Esophagus muscularis mucosa (tissue), 4 donors: ENCODE measurements at regions of chr7 and their contacts with region 1.

Region 1: DNA sequence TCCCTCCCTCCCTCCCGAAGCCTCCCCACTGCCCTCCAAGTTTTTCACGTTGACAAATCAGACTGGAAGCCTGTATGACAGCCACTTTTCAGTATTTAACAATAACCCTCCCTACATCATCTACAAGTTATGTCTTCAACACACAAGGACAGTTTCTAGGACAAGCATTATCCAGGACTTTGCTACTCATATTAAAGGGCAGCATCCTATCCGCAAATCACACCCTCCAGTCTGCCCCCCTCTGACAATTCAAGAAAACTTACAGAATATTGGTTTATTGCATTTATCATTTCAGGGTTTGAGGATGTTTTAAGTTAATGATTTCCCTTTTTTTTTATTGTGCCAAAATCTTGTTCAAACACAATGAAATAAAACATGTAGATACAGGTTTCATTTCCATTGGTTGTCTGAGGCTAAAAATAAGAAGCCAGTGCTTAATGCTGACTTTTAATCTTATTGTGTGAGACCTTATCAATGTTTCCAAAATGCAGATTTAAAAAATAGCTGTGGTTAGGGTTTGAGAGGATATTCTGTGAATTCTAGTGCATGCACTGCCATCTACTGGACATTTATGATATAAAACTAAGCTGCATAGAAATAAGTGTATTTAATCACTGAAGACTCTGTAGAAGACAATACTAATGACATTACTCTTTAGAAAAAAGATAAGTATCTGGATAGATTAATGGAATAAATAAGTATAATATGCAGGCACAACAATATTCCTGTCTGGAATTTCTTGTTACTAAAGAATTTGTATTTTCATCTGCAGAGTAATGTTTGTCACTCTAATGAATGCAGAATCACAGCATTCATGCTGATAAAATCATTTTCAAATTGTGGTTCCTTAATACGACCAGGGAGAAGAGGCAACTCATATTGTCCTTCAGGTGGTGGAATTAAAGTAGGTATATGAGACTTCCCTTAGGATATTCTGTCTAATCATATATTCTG is 64.1 kb downstream of the CAV1 start:
- DNase-seq: no peak
- H3K4me3 ChIP-seq: no peak overlapping the region
- H3K27ac ChIP-seq: peak overlapping the region in 3 of 4 donors; percentile 2 to 38 (median 18)
- H3K4me1 ChIP-seq: peaks cover 12 to 29% (median 25%) of the 10 kb centered on the region in 4 donors
- H3K27me3 ChIP-seq: no peaks in the 10 kb centered on the region
- CTCF ChIP-seq: peak; percentile 67 to 78 (median 68)
- EP300 ChIP-seq: no peak
- POLR2A ChIP-seq: no peak

Region 2: DNA sequence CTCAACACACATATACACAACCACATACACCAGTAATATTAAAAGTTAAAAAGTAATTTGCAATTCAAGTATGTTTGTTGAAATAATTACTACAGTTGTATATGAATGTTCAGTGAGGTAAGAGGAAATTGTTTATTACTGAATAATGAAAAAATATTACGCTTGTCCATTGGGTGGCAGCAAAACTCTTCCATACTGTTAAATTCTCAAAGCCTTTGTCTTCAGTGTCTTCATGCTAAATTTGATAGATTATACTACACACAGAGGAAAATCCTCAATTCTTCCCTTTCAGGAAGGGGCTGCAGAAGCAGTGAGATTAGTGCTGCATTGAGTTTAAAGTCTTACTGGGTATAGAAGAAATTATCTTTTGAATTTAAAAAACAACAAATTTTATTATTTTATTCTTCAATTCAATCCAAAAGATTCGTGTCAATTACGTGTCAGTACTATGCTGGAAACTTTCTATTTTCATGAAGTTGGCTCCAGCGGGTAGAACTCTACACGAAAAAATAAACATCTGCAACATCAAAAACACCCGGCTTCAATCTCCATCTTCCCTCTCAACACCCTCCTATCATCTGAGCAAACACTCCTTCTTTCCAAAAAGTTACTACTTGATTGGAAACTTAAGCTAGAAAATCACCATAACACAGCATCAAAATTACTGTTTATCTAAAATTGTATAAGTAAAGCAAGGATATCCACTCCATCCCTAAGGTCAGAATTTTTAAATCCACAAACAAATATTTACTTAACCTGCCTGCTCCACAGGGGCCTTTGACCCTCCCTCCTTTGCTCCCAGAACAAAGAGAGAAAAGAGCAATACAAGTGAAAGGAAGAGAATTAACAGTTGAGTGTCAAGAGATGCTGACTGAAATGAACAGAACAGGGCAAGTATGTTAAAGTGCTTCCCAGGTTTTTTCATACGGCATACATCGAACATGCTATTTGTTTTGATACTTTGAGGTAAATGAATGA is 415.6 kb before region 1 on chr7:
- intact Hi-C with region 1: loop called (anchors 5 kb)
- DNase-seq: no peak
- H3K4me3 ChIP-seq: no peak overlapping the region
- H3K27ac ChIP-seq: no peak overlapping the region
- H3K4me1 ChIP-seq: no peaks in the 10 kb centered on the region
- H3K27me3 ChIP-seq: no peaks in the 10 kb centered on the region
- CTCF ChIP-seq: peak; percentile 53 to 66 (median 54)
- EP300 ChIP-seq: no peak
- POLR2A ChIP-seq: no peak

Region 3: GRCh38 chr7:116258734-116259133 is 330.2 kb before region 1 on chr7:
- intact Hi-C with region 1: loop called (anchors 2 kb)
- DNase-seq: no peak
- H3K4me3 ChIP-seq: no peak overlapping the region
- H3K27ac ChIP-seq: peak overlapping the region; percentile 25 to 56 (median 46)
- H3K4me1 ChIP-seq: peaks cover 5 to 15% (median 10%) of the 10 kb centered on the region in 4 donors
- H3K27me3 ChIP-seq: no peaks in the 10 kb centered on the region
- CTCF ChIP-seq: peak; percentile 81 to 90 (median 84)
- EP300 ChIP-seq: no peak
- POLR2A ChIP-seq: no peak

Region 4: GRCh38 chr7:116438267-116438666 is 150.7 kb before region 1 on chr7:
- intact Hi-C with region 1: loop called (anchors 10 kb)
- DNase-seq: no peak
- H3K4me3 ChIP-seq: no peak overlapping the region
- H3K27ac ChIP-seq: no peak overlapping the region
- H3K4me1 ChIP-seq: peaks cover 5 to 34% (median 12%) of the 10 kb centered on the region in 4 donors
- H3K27me3 ChIP-seq: no peaks in the 10 kb centered on the region
- CTCF ChIP-seq: peak in 2 of 3 experiments; percentile 11 to 12
- EP300 ChIP-seq: no peak
- POLR2A ChIP-seq: no peak

Region 5: GRCh38 chr7:116525913-116526861 is 62.7 kb before region 1 on chr7:
- intact Hi-C with region 1: loop called (anchors 5 kb)
- DNase-seq: peak; percentile 92
- H3K4me3 ChIP-seq: peak overlapping the region; percentile 65 to 91 (median 81)
- H3K27ac ChIP-seq: peak overlapping the region; percentile 91 to 99 (median 96)
- H3K4me1 ChIP-seq: peaks cover 33 to 70% (median 66%) of the 10 kb centered on the region in 4 donors
- H3K27me3 ChIP-seq: no peaks in the 10 kb centered on the region
- CTCF ChIP-seq: peak; percentile 87 to 93 (median 91)
- EP300 ChIP-seq: no peak
- POLR2A ChIP-seq: peak; percentile 48

Region 6: GRCh38 chr7:116665332-116665996 is 76.5 kb after region 1 on chr7:
- intact Hi-C with region 1: loop called (anchors 10 kb)
- DNase-seq: no peak
- H3K4me3 ChIP-seq: no peak overlapping the region
- H3K27ac ChIP-seq: no peak overlapping the region
- H3K4me1 ChIP-seq: peaks cover 0 to 2% (median 0%) of the 10 kb centered on the region in 4 donors
- H3K27me3 ChIP-seq: no peaks in the 10 kb centered on the region
- CTCF ChIP-seq: no peak
- EP300 ChIP-seq: no peak
- POLR2A ChIP-seq: no peak

Region 7: GRCh38 chr7:116902867-116903266 is 313.9 kb after region 1 on chr7:
- intact Hi-C with region 1: no loop called
- DNase-seq: no peak
- H3K4me3 ChIP-seq: no peak overlapping the region
- H3K27ac ChIP-seq: no peak overlapping the region
- H3K4me1 ChIP-seq: peaks cover 13 to 22% (median 17%) of the 10 kb centered on the region in 4 donors
- H3K27me3 ChIP-seq: no peaks in the 10 kb centered on the region
- CTCF ChIP-seq: no peak
- EP300 ChIP-seq: no peak
- POLR2A ChIP-seq: no peak